Activated CD8-positive, alpha-beta T cell treated with anti-CD3 and anti-CD28 coated beads for 36 hours (primary cell): ENCODE measurements at regions of chr20 and their contacts with region 1.

Region 1: GRCh38 chr20:8722276-8722928 is 346.5 kb upstream of the PLCB4 start:
- DNase-seq: peak; percentile 32
- ATAC-seq: peak; percentile 51
- H3K4me3 Mint-ChIP-seq: no peak overlapping the region
- H3K27ac Mint-ChIP-seq: no peak overlapping the region
- H3K4me1 Mint-ChIP-seq: no peaks in the 10 kb centered on the region
- H3K27me3 Mint-ChIP-seq: no peaks in the 10 kb centered on the region
- CTCF ChIP-seq: peak; percentile 56

Region 2: DNA sequence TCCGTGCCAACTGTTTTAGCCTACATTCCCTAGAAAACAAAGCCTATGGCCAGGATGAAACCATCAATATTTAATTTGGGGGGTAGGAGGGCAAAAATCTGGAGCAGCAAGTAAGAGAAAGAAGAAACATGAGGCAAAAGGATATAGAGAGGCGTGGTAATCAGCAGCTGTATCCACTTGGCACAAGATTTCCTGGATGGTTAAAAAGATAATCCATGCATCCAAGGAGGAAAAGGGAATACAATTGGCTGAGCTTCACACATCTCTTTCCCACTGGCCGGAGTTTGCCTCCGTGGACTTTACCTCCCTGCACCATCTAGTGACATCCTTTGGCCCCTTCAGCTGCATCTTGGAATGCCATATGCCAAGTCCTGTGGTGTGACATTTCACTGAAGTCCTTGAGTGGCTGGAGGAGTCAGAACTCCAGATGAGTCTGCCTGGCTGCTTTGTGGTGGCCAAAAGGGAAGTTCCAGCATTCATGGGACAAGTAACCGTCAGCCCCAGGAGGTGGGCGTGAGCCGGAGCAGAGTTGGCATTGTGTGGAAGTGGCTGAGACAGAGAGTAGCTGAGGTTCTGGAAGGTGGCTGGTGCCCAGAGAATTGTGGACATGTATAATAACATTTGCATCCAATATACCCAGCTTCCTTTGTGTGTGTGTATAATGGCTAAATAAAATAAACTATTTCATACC is 689.1 kb before region 1 on chr20:
- CTCF ChIA-PET with region 1: interaction called, 13 read pairs
- POLR2A ChIA-PET with region 1: no interaction called
- intact Hi-C with region 1: no loop called
- DNase-seq: no peak
- ATAC-seq: no peak
- H3K4me3 Mint-ChIP-seq: no peak overlapping the region
- H3K27ac Mint-ChIP-seq: no peak overlapping the region
- H3K4me1 Mint-ChIP-seq: no peaks in the 10 kb centered on the region
- H3K27me3 Mint-ChIP-seq: no peaks in the 10 kb centered on the region
- CTCF ChIP-seq: no peak

Region 3: DNA sequence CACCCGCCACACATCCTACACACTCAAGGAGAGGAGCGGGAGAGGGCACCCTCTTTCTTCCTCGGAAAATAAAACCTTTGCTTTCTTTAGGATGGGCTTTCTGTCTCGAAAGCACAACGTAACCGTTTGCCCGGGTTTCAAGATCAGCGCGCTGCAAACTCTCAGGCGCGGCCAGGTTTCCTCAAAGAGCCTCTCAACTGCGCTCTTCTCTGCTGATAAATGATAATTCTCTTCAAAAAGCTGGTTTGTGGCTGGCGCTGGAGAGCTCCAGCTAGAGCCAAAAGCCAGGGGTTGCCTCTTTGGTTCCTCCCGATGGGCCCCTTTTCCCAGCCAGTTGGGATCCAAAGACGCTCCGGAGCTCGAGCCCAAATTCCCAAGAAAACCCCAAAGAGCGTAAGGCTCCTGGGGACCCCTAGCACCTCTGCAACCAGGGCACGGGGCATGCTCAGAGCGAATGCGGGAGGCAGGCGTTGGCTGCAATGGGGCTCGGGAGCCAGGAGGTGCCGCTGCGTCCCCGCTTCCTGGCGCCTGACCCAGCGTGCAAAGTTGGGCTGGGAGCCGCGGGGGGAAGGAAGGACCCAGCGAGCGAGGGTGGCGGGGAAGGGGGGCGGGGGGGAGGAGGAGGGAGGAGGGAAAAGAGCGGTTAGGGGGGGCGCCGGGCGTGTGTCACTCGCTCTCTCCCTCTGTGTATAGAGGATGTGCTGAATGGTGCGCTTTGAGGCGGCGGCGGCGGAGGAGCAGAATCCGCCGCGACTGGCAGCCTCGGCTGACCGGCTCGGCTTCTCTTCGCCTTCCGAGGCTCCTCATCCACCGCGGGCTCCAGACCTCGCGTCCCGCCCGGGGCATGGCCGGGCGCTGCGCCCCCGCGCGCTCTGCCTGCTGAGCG is 590.6 kb before region 1 on chr20 and contains the start of gene PLCB1:
- CTCF ChIA-PET with region 1: interaction called, 56 read pairs
- POLR2A ChIA-PET with region 1: no interaction called
- intact Hi-C with region 1: loop called (anchors 5 kb)
- DNase-seq: peak; percentile 86
- ATAC-seq: peak; percentile 93
- H3K4me3 Mint-ChIP-seq: peak within 1 kb of the TSS; percentile 76
- H3K27ac Mint-ChIP-seq: peak within 1 kb of the TSS; percentile 27
- H3K4me1 Mint-ChIP-seq: peaks cover 26% of the 10 kb centered on the region
- H3K27me3 Mint-ChIP-seq: peaks cover 33% of the 10 kb centered on the region
- CTCF ChIP-seq: peak; percentile 73
- total RNA-seq, gene PLCB1: 3.1 to 3.6 TPM

Region 4: DNA sequence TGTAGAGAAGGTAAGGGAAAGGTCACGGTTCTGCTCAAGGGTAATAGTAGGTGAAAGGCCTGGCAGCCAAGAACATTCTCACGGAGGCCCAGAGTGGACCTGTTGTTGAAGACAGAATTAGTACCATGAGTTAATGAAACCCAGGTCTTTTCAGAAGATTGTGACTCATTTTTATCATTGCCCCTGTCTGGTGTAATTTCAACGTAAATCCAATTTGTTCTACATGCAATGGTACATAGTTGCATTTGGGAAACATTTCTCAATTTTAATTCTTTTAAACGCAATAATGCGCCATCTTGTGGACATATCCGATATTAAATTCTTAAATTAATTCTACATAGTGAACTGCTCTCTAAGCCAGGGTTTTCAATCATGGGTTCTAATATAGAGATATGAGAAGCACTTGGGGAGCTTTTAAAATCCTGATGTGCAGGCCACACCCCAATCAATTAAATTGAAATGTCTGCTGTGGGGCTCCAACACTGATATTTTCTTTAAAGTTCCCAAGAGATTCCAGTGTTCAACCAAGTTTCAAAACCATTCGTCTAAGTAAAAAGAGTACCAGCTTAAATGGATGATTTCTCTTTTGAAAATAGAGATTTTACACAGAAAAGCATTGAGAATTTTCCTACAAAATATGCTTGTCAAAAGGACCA is 332.9 kb before region 1 on chr20:
- CTCF ChIA-PET with region 1: interaction called, 11 read pairs
- POLR2A ChIA-PET with region 1: no interaction called
- intact Hi-C with region 1: loop called (anchors 10 kb)
- DNase-seq: no peak
- ATAC-seq: no peak
- H3K4me3 Mint-ChIP-seq: no peak overlapping the region
- H3K27ac Mint-ChIP-seq: no peak overlapping the region
- H3K4me1 Mint-ChIP-seq: peaks cover 7% of the 10 kb centered on the region
- H3K27me3 Mint-ChIP-seq: no peaks in the 10 kb centered on the region
- CTCF ChIP-seq: peak; percentile 81

Region 5: DNA sequence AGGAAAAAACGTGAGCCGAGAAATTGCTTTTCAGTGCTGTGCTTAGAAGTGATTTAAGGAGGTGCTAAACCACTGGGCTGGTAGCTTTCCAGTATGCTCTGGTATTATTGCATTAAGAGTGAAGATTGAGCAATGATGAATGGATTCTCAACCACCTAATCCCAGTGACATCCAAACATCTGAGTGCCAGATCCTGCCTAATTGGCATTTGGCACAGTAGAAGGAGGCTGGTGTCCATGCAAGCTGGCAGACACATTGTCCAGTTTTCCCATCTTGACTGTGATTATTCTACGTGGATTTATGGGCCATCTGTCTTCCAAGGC is 51.5 kb before region 1 on chr20:
- CTCF ChIA-PET with region 1: interaction called, 17 read pairs
- POLR2A ChIA-PET with region 1: no interaction called
- intact Hi-C with region 1: no loop called
- DNase-seq: no peak
- ATAC-seq: no peak
- H3K4me3 Mint-ChIP-seq: no peak overlapping the region
- H3K27ac Mint-ChIP-seq: no peak overlapping the region
- H3K4me1 Mint-ChIP-seq: peaks cover 5% of the 10 kb centered on the region
- H3K27me3 Mint-ChIP-seq: no peaks in the 10 kb centered on the region
- CTCF ChIP-seq: no peak

Region 6: GRCh38 chr20:8735674-8736073 is 13.3 kb after region 1 on chr20:
- CTCF ChIA-PET with region 1: interaction called, 16 read pairs
- POLR2A ChIA-PET with region 1: no interaction called
- intact Hi-C with region 1: no loop called
- DNase-seq: no peak
- ATAC-seq: no peak
- H3K4me3 Mint-ChIP-seq: no peak overlapping the region
- H3K27ac Mint-ChIP-seq: no peak overlapping the region
- H3K4me1 Mint-ChIP-seq: no peaks in the 10 kb centered on the region
- H3K27me3 Mint-ChIP-seq: no peaks in the 10 kb centered on the region
- CTCF ChIP-seq: no peak

Region 7: GRCh38 chr20:8953300-8953699 is 230.9 kb after region 1 on chr20:
- CTCF ChIA-PET with region 1: no interaction called
- POLR2A ChIA-PET with region 1: no interaction called
- intact Hi-C with region 1: no loop called
- DNase-seq: no peak
- ATAC-seq: no peak
- H3K4me3 Mint-ChIP-seq: no peak overlapping the region
- H3K27ac Mint-ChIP-seq: no peak overlapping the region
- H3K4me1 Mint-ChIP-seq: no peaks in the 10 kb centered on the region
- H3K27me3 Mint-ChIP-seq: no peaks in the 10 kb centered on the region
- CTCF ChIP-seq: no peak